HEK293T (cell line): ENCODE measurements at regions of chr1 and their contacts with region 1.

Region 1: DNA sequence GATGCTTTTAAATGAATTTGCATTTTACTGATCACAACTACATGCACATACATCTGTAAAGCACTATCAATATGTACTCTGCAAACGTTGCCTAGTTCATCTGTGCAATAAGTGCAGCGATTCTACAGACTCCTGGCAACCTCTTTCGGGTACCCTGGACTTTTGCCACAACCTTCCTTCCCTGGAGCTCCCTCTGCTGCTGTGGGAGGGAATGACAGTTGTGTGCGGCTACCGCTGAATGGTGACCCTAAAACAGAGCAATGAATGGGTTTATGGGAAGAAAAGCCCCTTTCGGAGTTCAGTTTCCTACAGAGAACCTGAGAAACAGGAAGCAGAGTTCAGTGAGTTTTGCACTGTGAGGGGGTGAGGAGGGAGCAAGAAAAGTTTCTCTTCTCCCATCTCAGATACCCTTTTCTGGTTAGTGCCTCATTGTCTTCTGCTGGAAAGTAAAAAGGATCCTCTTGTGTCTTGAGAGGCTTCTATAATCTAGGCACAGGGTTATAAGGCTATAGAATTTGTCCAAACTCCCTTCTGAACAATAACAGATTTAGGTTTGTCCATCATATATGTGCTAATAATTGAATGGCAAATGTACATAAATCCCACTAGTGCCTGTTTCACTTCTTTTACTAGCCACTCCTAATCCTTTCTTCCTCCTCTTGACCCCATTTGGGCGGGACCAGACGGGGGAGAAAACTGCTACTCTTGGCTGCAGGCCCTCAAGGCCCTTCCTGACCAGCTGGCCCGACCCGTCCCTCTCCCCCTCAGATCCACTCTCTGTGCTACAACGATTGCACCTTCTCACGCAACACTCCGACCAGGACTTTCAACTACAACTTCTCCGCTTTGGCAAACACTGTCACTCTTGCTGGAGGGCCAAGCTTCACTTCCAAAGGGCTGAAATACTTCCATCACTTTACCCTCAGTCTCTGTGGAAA is 19.8 kb upstream of the SARS1 start:
- DNase-seq: peak; percentile 87

Region 2: DNA sequence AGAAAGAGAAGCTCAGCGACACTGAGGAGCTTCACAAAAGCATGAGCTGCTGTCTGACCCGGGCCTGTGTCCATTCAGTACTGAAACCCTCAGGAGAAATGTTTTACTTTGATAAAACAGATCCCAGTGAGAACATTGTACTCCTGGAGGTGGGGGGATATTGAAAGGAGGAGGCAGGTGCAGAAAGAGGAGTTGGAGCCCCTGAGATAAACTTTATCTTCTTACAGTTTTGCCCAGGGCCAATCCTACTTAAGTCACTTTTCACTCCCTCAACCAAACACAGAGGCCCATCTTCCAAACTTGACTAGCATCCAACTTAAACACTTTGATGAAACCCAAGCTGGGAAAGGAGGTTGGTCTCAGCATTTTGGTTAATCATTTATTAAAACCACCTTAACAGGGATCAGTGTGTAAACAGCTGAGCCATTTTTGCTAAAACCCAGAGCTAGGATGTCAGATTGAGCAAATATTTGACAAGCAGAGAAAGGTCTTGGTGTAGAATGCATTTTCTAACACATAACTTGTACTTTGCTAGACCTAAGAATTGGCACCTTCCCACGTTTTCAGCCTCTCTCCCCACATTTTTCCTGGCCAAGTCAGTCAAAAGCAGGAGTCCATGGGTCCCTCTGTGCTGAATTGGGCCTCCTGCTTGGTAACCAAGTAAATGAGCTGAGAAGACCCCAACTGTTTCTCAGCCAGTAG is 12.7 kb before region 1 on chr1:
- CTCF ChIA-PET with region 1: interaction called, 10 read pairs
- POLR2A ChIA-PET with region 1: interaction called, 3 read pairs
- DNase-seq: no peak

Region 3: GRCh38 chr1:109697088-109697487 is 503.2 kb after region 1 on chr1:
- CTCF ChIA-PET with region 1: no interaction called
- POLR2A ChIA-PET with region 1: no interaction called
- DNase-seq: no peak